ENCODE measurements at regions of chr10 and their contacts with region 1.

Region 1: DNA sequence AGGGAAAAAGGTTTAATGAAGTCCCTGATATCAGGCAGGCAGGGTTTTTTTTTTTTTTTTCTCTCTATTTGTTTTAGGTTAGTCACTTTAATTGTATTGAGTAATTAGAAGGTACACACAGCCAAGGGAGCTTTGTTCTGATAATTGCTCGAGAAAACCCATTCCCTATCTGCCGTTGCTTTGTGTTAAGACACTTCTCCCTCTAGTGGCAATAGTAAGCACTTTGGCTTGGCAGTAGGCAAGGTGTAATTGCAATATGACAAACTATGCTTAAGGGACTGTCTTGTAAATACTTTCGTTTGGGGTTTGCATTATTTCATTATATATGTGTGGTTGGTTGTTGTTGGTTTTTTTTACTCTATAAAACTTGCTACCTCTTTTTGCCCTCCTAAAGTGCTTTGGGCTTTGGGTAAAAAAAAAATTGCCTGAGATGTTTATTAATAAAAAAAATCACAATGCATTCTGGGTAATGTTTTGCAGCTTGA is 113.4 kb downstream of the BTRC start:
- DNase-seq: peak; percentile 69 to 76
- ATAC-seq: peak; percentile 87 to 89
- H3K4me3 ChIP-seq: no peak overlapping the region
- H3K27ac ChIP-seq: no peak overlapping the region
- H3K4me1 ChIP-seq: no peaks in the 10 kb centered on the region
- CTCF ChIP-seq: peak; percentile 71
- EP300 ChIP-seq: no peak
- POLR2A ChIP-seq: no peak
- RAD21 ChIP-seq: peak; percentile 46 to 62; a peak in 4 of 5 replicates

Region 2: GRCh38 chr10:101207026-101207425 is 260.3 kb before region 1 on chr10:
- CTCF ChIA-PET with region 1: interaction called, 27 read pairs
- POLR2A ChIA-PET with region 1: no interaction called
- DNase-seq: no peak
- ATAC-seq: peak; percentile 35 to 52; a peak in 4 of 6 replicates
- H3K4me3 ChIP-seq: no peak overlapping the region
- H3K27ac ChIP-seq: no peak overlapping the region
- H3K4me1 ChIP-seq: no peaks in the 10 kb centered on the region
- CTCF ChIP-seq: no peak
- EP300 ChIP-seq: no peak
- POLR2A ChIP-seq: no peak
- RAD21 ChIP-seq: no peak

Region 3: GRCh38 chr10:101297901-101298486 is 169.3 kb before region 1 on chr10:
- CTCF ChIA-PET with region 1: interaction called, 30 read pairs
- POLR2A ChIA-PET with region 1: no interaction called
- DNase-seq: peak; percentile 74 to 82
- ATAC-seq: peak; percentile 85 to 93
- H3K4me3 ChIP-seq: no peak overlapping the region
- H3K27ac ChIP-seq: no peak overlapping the region
- H3K4me1 ChIP-seq: no peaks in the 10 kb centered on the region
- CTCF ChIP-seq: peak; percentile 87
- EP300 ChIP-seq: no peak
- POLR2A ChIP-seq: no peak
- RAD21 ChIP-seq: peak in 1 of 2 experiments; percentile 32; a peak in 1 of 5 replicates

Region 4: DNA sequence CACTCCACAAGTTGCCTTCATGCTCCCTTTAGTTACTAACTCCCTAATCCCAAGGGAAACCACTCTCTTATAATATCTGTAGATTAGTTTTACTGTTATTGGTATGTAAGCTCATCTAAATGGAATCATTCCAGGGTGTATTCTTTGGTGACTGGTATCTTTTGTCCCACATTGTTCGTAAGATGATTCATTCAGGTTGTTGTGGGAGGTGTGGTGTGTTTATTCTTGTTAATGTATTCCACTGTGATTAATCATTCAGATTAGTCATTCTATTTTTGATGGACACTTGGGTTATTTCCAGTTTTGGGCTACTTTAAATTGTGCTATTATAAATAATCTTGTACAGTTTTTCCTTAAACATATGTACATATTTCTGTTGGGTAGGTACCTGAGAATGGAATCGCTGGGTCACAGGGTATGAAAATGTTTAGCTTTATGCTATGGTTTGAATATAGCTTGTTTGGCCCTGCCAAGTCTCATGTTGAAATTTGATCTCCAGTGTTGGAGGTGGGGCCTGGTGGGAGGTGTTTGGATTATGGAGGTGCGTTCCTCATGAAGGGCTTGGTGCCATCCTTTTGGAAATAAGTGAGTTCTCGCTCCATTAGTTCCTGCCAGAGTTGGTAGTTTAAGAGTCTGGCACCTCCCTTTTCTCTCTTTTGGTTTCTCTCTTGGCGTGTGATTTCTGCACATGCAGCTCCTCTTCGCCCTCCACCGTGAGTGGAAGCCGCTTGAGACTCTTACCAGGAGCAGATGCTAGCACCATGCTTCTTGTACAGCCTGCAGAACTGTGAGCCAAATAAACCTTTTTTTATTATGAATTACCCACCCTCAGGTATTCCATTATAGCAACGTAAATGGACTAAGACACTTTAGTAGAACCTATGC is 99.5 kb before region 1 on chr10:
- CTCF ChIA-PET with region 1: no interaction called
- POLR2A ChIA-PET with region 1: no interaction called
- DNase-seq: peak; percentile 71
- ATAC-seq: peak; percentile 74 to 84; a peak in 5 of 6 replicates
- H3K4me3 ChIP-seq: no peak overlapping the region
- H3K27ac ChIP-seq: 0 out of 6 replicates have a peak overlapping the region, but pooled peaks of 1 of the 2 experiments have one; percentile 14
- H3K4me1 ChIP-seq: peaks cover 21% of the 10 kb centered on the region
- CTCF ChIP-seq: no peak
- EP300 ChIP-seq: no peak
- POLR2A ChIP-seq: no peak
- RAD21 ChIP-seq: no peak

Region 5: GRCh38 chr10:101481256-101481655 is 13.9 kb after region 1 on chr10:
- CTCF ChIA-PET with region 1: interaction called, 31 read pairs
- POLR2A ChIA-PET with region 1: no interaction called
- DNase-seq: no peak
- ATAC-seq: no peak
- H3K4me3 ChIP-seq: no peak overlapping the region
- H3K27ac ChIP-seq: no peak overlapping the region
- H3K4me1 ChIP-seq: no peaks in the 10 kb centered on the region
- CTCF ChIP-seq: no peak
- EP300 ChIP-seq: no peak
- POLR2A ChIP-seq: no peak
- RAD21 ChIP-seq: no peak

Region 6: DNA sequence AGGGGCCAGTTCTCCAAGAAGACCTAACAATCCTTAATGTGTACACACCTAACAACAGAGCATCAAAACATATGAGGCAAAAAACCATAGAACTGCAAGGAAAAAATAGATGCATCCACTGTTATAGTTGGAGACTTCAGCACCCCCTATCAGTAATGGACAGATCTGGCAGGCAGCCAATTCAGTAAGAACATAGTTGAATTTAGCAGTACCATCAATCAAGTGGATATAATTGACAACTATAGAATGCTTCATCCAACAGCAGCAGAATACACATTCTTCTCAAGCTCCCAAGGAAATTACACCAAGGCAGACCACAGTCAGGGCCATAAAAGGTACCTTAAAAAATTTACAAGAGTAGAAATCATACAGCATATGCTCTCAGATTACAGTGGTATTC is 78.6 kb after region 1 on chr10:
- CTCF ChIA-PET with region 1: no interaction called
- POLR2A ChIA-PET with region 1: no interaction called
- DNase-seq: no peak
- ATAC-seq: no peak
- H3K4me3 ChIP-seq: no peak overlapping the region
- H3K27ac ChIP-seq: no peak overlapping the region
- H3K4me1 ChIP-seq: no peaks in the 10 kb centered on the region
- CTCF ChIP-seq: no peak
- EP300 ChIP-seq: no peak
- POLR2A ChIP-seq: no peak
- RAD21 ChIP-seq: no peak